OCI-LY7 (cell line): ENCODE measurements at regions of chr18 and their contacts with region 1.

Region 1: GRCh38 chr18:24108639-24109306 is 30.1 kb upstream of the CABYR start:
- DNase-seq: no peak
- H3K4me3 ChIP-seq: no peak overlapping the region
- H3K27ac ChIP-seq: no peak overlapping the region
- H3K4me1 ChIP-seq: peaks cover 5% of the 10 kb centered on the region
- CTCF ChIP-seq: no peak

Region 2: DNA sequence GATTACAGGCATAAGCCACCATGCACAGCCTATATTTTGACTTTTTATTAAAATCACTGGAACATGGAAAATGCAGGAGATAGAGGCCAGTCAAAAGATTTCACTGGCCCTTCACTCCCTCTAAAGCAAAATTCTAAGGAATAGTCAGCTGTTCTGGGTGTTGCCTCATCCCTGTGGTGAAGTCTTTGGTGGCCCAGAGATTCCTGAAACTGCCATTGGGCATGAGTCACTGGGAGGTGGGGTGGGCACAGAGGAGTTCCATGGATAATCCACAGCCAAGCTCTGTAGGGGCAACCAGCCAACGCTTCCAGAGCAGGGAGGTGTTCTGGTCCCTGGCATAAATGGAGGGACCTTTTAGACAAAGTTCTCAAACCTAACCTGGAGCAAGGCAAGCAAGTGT is 184.0 kb before region 1 on chr18:
- CTCF ChIA-PET with region 1: no interaction called
- POLR2A ChIA-PET with region 1: interaction called, 4 read pairs
- intact Hi-C with region 1: loop called (anchors 5 kb)
- DNase-seq: no peak
- H3K4me3 ChIP-seq: no peak overlapping the region
- H3K27ac ChIP-seq: no peak overlapping the region
- H3K4me1 ChIP-seq: no peaks in the 10 kb centered on the region
- CTCF ChIP-seq: no peak

Region 3: DNA sequence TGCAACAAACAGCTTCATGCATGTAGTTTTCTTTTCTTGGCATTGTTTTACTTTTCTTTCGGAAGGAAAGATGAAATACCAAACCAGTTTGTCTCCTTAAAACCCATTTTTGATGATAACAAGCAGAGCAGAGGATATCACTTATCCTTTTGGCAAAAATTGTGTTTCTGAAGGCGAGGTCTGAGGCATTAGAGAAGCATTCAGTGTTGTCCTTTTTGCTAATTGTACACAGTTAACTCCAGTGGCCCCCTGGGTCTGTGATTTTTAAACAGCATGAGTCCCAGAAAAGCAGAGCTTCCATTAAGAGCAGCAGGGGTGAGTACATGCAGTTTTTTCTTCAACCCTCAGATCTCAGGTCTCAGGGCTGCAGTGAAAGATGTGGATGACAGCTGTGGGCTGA is 52.9 kb before region 1 on chr18:
- CTCF ChIA-PET with region 1: no interaction called
- POLR2A ChIA-PET with region 1: no interaction called
- intact Hi-C with region 1: loop called (anchors 5 kb)
- DNase-seq: no peak
- H3K4me3 ChIP-seq: no peak overlapping the region
- H3K27ac ChIP-seq: no peak overlapping the region
- H3K4me1 ChIP-seq: peaks cover 23% of the 10 kb centered on the region
- CTCF ChIP-seq: no peak